ENCODE measurements at regions of chr13 and their contacts with region 1.

Region 1: GRCh38 chr13:74090869-74091605 is 43.2 kb downstream of the KLF12 start:
- DNase-seq: no peak
- H3K4me3 Mint-ChIP-seq: no peak overlapping the region
- H3K27ac Mint-ChIP-seq: no peak overlapping the region
- H3K4me1 Mint-ChIP-seq: peaks cover 36% of the 10 kb centered on the region
- H3K27me3 Mint-ChIP-seq: no peaks in the 10 kb centered on the region

Region 2: DNA sequence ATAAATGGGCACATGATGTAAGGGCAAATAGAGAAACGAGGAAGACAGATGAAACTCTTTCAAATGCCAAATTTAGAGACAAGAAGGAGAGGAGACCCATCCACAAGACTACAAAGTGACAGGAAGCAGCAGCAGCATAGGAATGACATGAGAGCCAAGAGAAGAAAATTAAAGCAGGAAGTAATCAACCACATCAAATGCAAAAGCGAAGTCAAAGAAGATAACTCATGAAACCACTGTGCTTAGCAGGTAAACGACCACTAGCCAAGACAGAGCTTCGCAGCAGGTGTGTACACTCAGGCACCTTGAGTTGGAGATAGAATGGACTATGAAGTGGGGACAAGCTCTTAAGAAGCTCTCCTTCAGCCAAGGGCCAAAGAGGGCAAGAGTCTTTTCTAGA is 21.0 kb before region 1 on chr13:
- intact Hi-C with region 1: loop called (anchors 2 kb)
- DNase-seq: peak; percentile 17
- H3K4me3 Mint-ChIP-seq: peak overlapping the region; percentile 15
- H3K27ac Mint-ChIP-seq: peak overlapping the region; percentile 32
- H3K4me1 Mint-ChIP-seq: peaks cover 32% of the 10 kb centered on the region
- H3K27me3 Mint-ChIP-seq: no peaks in the 10 kb centered on the region

Region 3: GRCh38 chr13:74105871-74106270 is 14.8 kb after region 1 on chr13:
- intact Hi-C with region 1: loop called (anchors 2 kb)
- DNase-seq: no peak
- H3K4me3 Mint-ChIP-seq: no peak overlapping the region
- H3K27ac Mint-ChIP-seq: no peak overlapping the region
- H3K4me1 Mint-ChIP-seq: peaks cover 25% of the 10 kb centered on the region
- H3K27me3 Mint-ChIP-seq: no peaks in the 10 kb centered on the region